ENCODE measurements at regions of chr6 and their contacts with region 1.

Region 1: DNA sequence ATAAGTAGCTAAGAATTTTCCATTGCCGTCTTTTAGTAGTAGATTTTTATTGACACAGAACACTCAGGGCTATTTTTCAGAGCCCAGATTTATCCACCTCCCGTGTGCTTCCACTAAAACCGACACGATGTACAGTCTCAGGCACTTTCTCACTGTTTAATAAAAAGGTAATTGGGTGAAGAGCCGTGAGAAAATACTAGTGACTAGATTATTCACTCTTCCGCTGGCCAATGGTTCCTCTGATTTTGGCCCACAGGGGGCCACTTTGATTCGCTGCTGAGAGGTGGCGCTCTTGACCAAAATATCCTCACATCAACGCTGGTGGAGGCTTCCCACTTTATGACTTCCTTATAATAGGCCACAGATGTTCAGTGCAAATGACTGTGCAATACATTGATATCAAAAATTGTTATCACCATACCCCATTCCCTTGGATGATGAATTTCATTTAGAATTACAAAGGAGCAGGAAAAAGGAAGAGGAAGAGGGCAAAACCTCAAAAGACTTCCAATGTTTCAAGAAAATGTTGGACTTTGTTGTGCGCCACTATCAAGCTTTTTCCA is 12.3 kb upstream of the HDDC2 start:
- DNase-seq: peak; percentile 76 to 78 (median 77)
- H3K4me3 ChIP-seq: no peak overlapping the region
- H3K27ac ChIP-seq: no peak overlapping the region
- H3K4me1 ChIP-seq: no peaks in the 10 kb centered on the region
- H3K27me3 ChIP-seq: peaks cover 0 to 20% (median 4%) of the 10 kb centered on the region in 5 experiments

Region 2: GRCh38 chr6:125296471-125296870 is 17.6 kb before region 1 on chr6:
- CTCF ChIA-PET with region 1: interaction called, 14 read pairs
- POLR2A ChIA-PET with region 1: no interaction called
- DNase-seq: no peak
- H3K4me3 ChIP-seq: no peak overlapping the region
- H3K27ac ChIP-seq: no peak overlapping the region
- H3K4me1 ChIP-seq: peaks cover 0 to 9% (median 1%) of the 10 kb centered on the region in 4 experiments
- H3K27me3 ChIP-seq: no peaks in the 10 kb centered on the region

Region 3: DNA sequence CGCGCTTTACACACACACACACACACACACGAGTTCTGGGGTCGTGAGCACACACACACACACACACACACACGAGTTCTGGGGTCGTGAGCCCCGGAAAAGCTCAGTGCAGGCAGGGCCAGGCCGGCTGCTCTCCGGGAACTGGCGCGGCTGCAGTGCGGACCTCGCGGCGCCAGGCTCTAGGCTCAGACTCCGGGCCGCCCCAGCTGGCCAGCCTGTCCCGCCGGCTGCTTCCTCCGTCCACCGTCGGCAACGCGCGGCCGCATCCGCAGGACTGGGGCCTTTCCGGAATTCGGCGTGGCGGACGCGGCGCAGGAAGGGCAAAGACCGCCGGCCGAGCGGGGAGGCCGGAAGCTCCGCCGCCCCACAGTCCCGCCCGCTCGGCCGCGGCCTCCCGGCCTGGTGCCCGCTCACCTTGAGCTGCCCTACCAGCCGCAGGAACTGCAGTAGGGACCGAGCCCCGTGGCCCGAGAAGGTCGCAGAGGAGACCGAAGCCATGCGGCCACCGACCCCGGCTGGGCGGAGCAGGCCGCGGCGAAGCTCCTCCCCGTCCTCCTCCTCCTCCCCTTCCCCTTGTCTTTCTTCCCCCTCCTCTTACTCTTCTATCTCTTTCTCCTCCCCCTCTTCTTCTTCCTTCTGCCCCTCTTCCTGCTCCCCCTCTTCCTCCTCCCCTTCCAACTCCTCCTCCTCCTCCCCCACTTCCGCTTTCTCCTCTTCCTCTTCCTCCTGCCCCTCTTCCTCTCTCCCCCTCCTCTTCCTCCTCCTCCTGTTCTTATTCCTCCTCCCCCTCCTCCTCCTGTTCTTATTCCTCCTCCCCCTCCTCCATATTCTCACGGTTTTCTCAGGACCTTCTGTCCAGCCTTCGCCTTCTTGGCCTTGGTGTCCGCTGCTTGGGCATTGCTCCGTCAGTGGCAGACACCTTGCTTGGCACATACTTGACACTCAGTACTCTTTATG is 12.4 kb before region 1 on chr6 and contains the start of gene HDDC2:
- CTCF ChIA-PET with region 1: interaction called, 14 read pairs
- POLR2A ChIA-PET with region 1: no interaction called
- DNase-seq: peak; percentile 33 to 74 (median 60)
- H3K4me3 ChIP-seq: peak within 1 kb of the TSS; percentile 60 to 86 (median 81)
- H3K27ac ChIP-seq: peak within 1 kb of the TSS in 1 of 2 experiments; percentile 76
- H3K4me1 ChIP-seq: peaks cover 0 to 9% (median 3%) of the 10 kb centered on the region in 4 experiments
- H3K27me3 ChIP-seq: peaks cover 0 to 17% (median 5%) of the 10 kb centered on the region in 5 experiments

Region 4: DNA sequence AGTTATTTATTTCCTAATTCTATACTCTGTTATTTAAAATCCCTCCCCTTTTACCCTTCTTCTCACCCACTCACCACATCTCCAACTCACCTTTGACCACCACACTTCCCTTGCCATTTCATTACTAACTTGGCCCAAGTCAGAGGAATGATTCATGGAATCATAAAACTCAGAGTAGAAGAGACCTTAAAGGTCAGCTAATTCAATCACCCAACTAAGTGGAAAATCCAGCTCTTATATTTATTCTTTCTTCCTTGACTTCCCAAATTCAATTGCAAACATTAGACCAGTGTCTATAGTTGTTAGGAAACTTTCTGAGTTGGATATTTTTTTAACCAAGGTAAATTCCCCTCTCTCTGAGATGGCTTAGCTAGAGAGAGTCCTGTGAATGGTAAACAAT is 408.8 kb after region 1 on chr6:
- CTCF ChIA-PET with region 1: no interaction called
- POLR2A ChIA-PET with region 1: no interaction called
- DNase-seq: no peak
- H3K4me3 ChIP-seq: no peak overlapping the region
- H3K27ac ChIP-seq: no peak overlapping the region
- H3K4me1 ChIP-seq: peaks cover 0 to 3% (median 0%) of the 10 kb centered on the region in 4 experiments
- H3K27me3 ChIP-seq: peaks cover 0 to 8% (median 6%) of the 10 kb centered on the region in 5 experiments

Region 5: GRCh38 chr6:125749173-125749864 is 435.2 kb after region 1 on chr6 and contains the start of gene HEY2:
- CTCF ChIA-PET with region 1: interaction called, 211 read pairs
- POLR2A ChIA-PET with region 1: no interaction called
- DNase-seq: peak; percentile 84 to 90 (median 85)
- H3K4me3 ChIP-seq: peak within 1 kb of the TSS; percentile 45 to 79 (median 67)
- H3K27ac ChIP-seq: no peak within 1 kb of the TSS
- H3K4me1 ChIP-seq: peaks cover 19 to 40% (median 35%) of the 10 kb centered on the region in 4 experiments
- H3K27me3 ChIP-seq: peaks cover 31 to 92% (median 63%) of the 10 kb centered on the region in 5 experiments

Region 6: GRCh38 chr6:125764121-125764671 is 450.1 kb after region 1 on chr6:
- CTCF ChIA-PET with region 1: interaction called, 211 read pairs
- POLR2A ChIA-PET with region 1: no interaction called
- DNase-seq: no peak
- H3K4me3 ChIP-seq: no peak overlapping the region
- H3K27ac ChIP-seq: no peak overlapping the region
- H3K4me1 ChIP-seq: no peaks in the 10 kb centered on the region
- H3K27me3 ChIP-seq: peaks cover 0 to 33% (median 25%) of the 10 kb centered on the region in 5 experiments